ENCODE measurements at regions of chr5 and their contacts with region 1.

Region 1: DNA sequence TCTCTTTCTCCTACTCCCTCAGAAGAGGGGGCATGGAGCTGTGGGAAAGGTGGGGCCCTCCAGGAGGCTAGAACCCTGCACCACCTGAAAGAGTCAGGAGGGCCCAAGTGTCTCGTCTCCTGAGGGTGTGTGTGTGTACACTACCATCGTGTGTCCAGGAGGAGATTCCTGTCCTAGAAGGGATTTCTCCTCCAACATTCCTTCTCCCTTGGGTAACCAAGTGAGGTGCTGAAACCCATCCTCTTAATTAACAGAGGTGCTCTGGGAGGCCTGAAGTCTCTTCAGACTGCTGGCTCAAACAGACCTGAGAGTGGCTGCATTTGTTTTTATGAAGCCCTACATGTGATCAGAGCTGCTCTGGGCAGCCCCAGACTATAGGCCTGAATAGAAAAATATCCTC is 61.1 kb upstream of the FAM169A start:
- DNase-seq: no peak
- ATAC-seq: no peak
- H3K4me3 ChIP-seq: no peak overlapping the region
- H3K4me3 Mint-ChIP-seq: no peak overlapping the region
- H3K27ac ChIP-seq: no peak overlapping the region
- H3K27ac Mint-ChIP-seq: no peak overlapping the region
- H3K4me1 ChIP-seq: no peaks in the 10 kb centered on the region
- H3K4me1 Mint-ChIP-seq: no peaks in the 10 kb centered on the region
- H3K27me3 ChIP-seq: no peaks in the 10 kb centered on the region
- H3K27me3 Mint-ChIP-seq: no peaks in the 10 kb centered on the region

Region 2: DNA sequence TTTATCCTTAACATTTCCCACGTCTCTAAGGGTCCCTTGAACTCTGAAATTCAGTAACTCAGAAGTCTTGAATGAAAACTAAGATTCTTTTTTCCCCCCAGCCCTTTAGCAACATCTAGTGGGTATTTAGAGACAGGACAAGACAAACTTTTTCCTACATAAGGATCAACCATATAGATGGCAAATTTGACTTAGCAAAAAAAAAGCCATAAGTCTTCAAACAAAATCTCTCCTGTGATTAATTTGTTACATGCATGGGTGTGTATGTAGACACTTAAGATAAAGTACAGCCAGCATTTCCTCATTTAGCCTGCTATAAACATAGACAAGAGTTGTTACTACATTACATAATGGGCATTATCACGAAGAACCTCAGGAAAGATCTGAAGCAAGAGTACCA is 338.4 kb after region 1 on chr5:
- CTCF ChIA-PET with region 1: interaction called, 21 read pairs
- POLR2A ChIA-PET with region 1: no interaction called
- intact Hi-C with region 1: loop called in 1 of 2 experiments (anchors 1 kb)
- DNase-seq: peak in 7 of 9 donors; percentile 27 to 65 (median 55)
- ATAC-seq: peak; percentile 75
- H3K4me3 ChIP-seq: no peak overlapping the region
- H3K4me3 Mint-ChIP-seq: no peak overlapping the region
- H3K27ac ChIP-seq: no peak overlapping the region
- H3K27ac Mint-ChIP-seq: peak overlapping the region in 1 of 9 donors; percentile 56
- H3K4me1 ChIP-seq: no peaks in the 10 kb centered on the region
- H3K4me1 Mint-ChIP-seq: peaks cover 0 to 5% (median 0%) of the 10 kb centered on the region in 7 donors
- H3K27me3 ChIP-seq: no peaks in the 10 kb centered on the region
- H3K27me3 Mint-ChIP-seq: peaks cover 0 to 11% (median 4%) of the 10 kb centered on the region in 5 donors

Region 3: GRCh38 chr5:75351139-75351926 is 424.0 kb after region 1 on chr5:
- CTCF ChIA-PET with region 1: no interaction called
- POLR2A ChIA-PET with region 1: no interaction called
- intact Hi-C with region 1: no loop called
- DNase-seq: no peak
- ATAC-seq: no peak
- H3K4me3 ChIP-seq: no peak overlapping the region
- H3K4me3 Mint-ChIP-seq: no peak overlapping the region
- H3K27ac ChIP-seq: no peak overlapping the region
- H3K27ac Mint-ChIP-seq: peak overlapping the region in 3 of 9 donors; percentile 9 to 62 (median 57)
- H3K4me1 ChIP-seq: no peaks in the 10 kb centered on the region
- H3K4me1 Mint-ChIP-seq: peaks cover 0 to 24% (median 0%) of the 10 kb centered on the region in 7 donors
- H3K27me3 ChIP-seq: no peaks in the 10 kb centered on the region
- H3K27me3 Mint-ChIP-seq: no peaks in the 10 kb centered on the region

Region 4: DNA sequence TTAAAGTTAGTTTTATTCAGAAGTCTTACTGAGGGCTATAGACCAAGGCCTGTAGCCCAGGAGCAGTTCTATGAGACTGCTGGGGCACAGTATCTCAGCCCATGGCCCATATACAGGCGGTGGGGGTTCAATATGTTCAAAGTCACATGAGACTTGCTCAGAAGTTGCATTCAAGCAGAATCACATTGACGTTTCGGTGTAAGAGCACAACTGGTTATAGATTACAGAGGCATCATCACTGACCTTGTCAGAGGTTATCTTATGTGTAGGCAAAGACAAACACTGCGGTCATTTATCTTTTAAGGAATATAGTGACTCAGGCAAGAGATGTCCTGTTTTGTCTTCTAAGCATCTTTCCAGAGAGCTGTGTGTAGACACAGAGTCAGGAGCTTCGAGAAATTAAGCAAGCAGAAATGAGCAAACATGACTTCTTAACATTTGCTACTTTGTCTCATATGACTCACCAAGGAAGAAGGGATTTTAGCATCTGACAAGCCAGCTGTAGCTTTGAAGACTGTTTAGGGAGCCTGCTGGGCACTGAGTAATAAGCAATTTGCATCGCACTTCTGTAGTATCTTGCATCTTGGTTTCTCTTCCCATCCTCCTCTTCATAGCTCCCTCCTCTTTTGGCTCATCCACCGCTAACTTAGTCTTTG is 1878.6 kb after region 1 on chr5:
- CTCF ChIA-PET with region 1: no interaction called
- POLR2A ChIA-PET with region 1: no interaction called
- intact Hi-C with region 1: no loop called
- DNase-seq: no peak
- ATAC-seq: peak; percentile 6
- H3K4me3 ChIP-seq: no peak overlapping the region
- H3K4me3 Mint-ChIP-seq: no peak overlapping the region
- H3K27ac ChIP-seq: no peak overlapping the region
- H3K27ac Mint-ChIP-seq: no peak overlapping the region
- H3K4me1 ChIP-seq: no peaks in the 10 kb centered on the region
- H3K4me1 Mint-ChIP-seq: peaks cover 0 to 4% (median 0%) of the 10 kb centered on the region in 7 donors
- H3K27me3 ChIP-seq: no peaks in the 10 kb centered on the region
- H3K27me3 Mint-ChIP-seq: peaks cover 0 to 20% (median 0%) of the 10 kb centered on the region in 5 donors